Calu3 (cell line): ENCODE measurements at regions of chr6 and their contacts with region 1.

Region 1: GRCh38 chr6:46221222-46221793 is 50.5 kb upstream of the ENPP5 start:
- DNase-seq: peak; percentile 9
- H3K4me3 Mint-ChIP-seq: no peak overlapping the region
- H3K27ac Mint-ChIP-seq: no peak overlapping the region
- H3K4me1 Mint-ChIP-seq: no peaks in the 10 kb centered on the region
- H3K27me3 Mint-ChIP-seq: peaks cover 20% of the 10 kb centered on the region
- CTCF ChIP-seq: peak; percentile 60

Region 2: GRCh38 chr6:44762496-44762895 is 1458.8 kb before region 1 on chr6:
- CTCF ChIA-PET with region 1: no interaction called
- intact Hi-C with region 1: no loop called
- DNase-seq: no peak
- H3K4me3 Mint-ChIP-seq: no peak overlapping the region
- H3K27ac Mint-ChIP-seq: no peak overlapping the region
- H3K4me1 Mint-ChIP-seq: no peaks in the 10 kb centered on the region
- H3K27me3 Mint-ChIP-seq: peaks cover 34% of the 10 kb centered on the region
- CTCF ChIP-seq: no peak

Region 3: GRCh38 chr6:46410334-46410953 is 189.1 kb after region 1 on chr6:
- CTCF ChIA-PET with region 1: interaction called, 45 read pairs
- intact Hi-C with region 1: loop called (anchors 1 kb)
- DNase-seq: peak; percentile 34
- H3K4me3 Mint-ChIP-seq: no peak overlapping the region
- H3K27ac Mint-ChIP-seq: no peak overlapping the region
- H3K4me1 Mint-ChIP-seq: no peaks in the 10 kb centered on the region
- H3K27me3 Mint-ChIP-seq: no peaks in the 10 kb centered on the region
- CTCF ChIP-seq: peak; percentile 52

Region 4: GRCh38 chr6:46626228-46626909 is 405.1 kb after region 1 on chr6:
- CTCF ChIA-PET with region 1: no interaction called
- intact Hi-C with region 1: loop called (anchors 10 kb)
- DNase-seq: peak; percentile 16
- H3K4me3 Mint-ChIP-seq: no peak overlapping the region
- H3K27ac Mint-ChIP-seq: no peak overlapping the region
- H3K4me1 Mint-ChIP-seq: no peaks in the 10 kb centered on the region
- H3K27me3 Mint-ChIP-seq: no peaks in the 10 kb centered on the region
- CTCF ChIP-seq: peak; percentile 36

Region 5: GRCh38 chr6:47455534-47456209 is 1234.4 kb after region 1 on chr6:
- CTCF ChIA-PET with region 1: no interaction called
- intact Hi-C with region 1: no loop called
- DNase-seq: peak; percentile 43
- H3K4me3 Mint-ChIP-seq: no peak overlapping the region
- H3K27ac Mint-ChIP-seq: no peak overlapping the region
- H3K4me1 Mint-ChIP-seq: peaks cover 33% of the 10 kb centered on the region
- H3K27me3 Mint-ChIP-seq: no peaks in the 10 kb centered on the region
- CTCF ChIP-seq: no peak